ENCODE measurements at regions of chr6 and their contacts with region 1.

Region 1: DNA sequence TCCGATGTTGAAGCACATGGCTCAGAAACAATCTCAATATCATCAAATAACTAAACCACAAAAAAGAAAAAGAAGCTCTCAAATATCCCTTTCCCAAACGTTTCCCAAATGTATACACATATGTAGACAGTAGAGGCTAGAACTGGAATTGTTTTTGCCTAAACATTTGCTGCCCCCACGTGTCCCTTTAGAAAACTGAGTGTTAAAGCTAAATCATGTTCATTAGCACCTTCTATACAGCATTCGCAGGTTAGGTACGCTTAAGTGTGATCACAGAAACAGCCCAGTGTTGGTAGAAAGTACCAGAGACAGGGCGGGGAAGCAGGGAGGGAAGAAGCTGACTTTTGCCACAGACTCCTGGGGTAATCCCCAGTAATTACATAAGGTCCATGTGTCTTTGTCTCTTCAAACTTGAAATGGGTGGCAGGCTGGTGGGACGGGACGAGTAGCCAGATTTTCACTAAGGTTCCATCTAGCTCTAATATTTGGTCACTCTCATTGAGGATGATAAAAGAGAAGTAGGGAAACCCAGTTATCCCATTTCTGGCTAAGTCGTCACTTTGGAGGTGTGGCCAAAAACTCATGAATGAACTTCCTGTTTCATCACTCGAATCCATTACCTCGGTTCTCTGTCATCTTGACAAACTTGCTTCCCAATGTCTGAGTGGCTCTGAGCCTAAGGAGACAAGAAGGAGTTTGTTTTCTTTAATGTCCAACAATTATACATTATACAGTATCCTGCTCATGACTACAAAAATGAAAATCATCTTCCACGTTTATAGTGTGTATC is 15.0 kb upstream of the TFAP2A start:
- DNase-seq: no peak
- ATAC-seq: peak; percentile 43

Region 2: DNA sequence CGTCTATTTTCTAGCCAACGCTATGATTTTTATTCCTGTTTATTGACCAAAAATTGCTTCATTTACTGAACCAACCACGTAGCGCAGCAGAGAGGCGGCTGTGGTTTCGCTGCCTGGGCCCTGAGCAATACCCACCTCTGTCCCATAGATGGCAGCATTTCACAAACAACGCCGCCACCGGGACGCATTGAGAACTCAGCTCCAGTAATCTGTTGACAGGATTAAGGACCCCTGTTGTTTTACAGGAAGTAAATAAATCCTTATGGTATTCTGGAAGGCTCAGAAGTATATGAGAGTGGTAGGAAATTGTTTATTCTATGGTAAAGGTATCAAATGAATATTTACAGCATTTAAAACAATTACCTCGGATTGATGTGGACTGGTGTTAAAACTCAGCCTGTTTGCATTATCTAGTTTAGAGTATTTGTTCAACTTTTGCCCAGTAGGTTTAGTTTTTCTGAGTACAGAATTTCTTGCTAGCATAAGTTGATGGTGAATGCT is 1446.6 kb before region 1 on chr6:
- intact Hi-C with region 1: loop called (anchors 10 kb)
- DNase-seq: peak; percentile 50
- ATAC-seq: peak; percentile 69

Measured in left ventricle myocardium superior (tissue), 1 donor.